GM13976 (cell line): ENCODE measurements at regions of chr14 and their contacts with region 1.

Region 1: GRCh38 chr14:77457522-77458290 is at the starts of genes AHSA1 and VIPAS39:
- DNase-seq: peak; percentile 92
- CTCF ChIP-seq: no peak

Region 2: DNA sequence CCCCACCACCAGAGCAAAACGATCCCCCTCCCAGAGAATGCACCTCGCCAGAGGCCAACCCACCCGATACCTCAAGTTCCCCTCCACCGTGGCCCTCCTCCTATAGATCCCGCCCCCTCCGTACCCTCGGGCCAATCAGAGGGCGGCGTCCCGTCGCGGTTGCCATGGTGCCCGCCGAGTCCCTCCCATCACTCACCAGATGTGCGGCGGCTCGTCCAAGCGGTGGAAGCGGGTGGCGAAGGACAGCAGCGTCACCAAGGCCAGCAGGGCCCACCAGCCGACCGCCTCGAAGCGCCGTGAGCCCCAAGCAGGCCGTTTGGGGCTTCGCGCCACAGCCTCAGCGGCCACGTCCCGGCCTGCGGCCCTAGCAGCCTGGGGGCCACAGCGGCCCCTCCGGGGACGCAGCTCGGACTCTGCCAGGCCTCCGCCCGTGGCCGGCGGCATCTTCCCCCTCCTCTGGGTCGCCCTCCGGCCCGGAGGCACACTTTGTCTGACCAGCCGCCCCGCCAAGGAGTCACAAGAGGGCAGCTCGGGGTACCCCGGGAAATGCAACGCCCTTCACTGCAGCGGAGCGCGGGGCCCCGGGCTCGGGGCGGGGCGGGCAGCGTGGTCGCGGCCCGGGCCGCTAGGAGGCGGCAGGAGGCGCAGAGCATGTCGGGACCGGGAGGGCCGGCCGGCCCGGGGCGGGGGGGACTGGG is 137.3 kb before region 1 on chr14 and contains the start of gene POMT2:
- in situ Hi-C with region 1: no loop called
- DNase-seq: peak; percentile 92
- CTCF ChIP-seq: peak; percentile 31

Region 3: GRCh38 chr14:77799863-77800730 is 342.4 kb after region 1 on chr14 and contains the start of gene ADCK1:
- in situ Hi-C with region 1: loop called (anchors 25 kb)
- DNase-seq: peak; percentile 92
- CTCF ChIP-seq: no peak